ENCODE measurements at regions of chr21 and their contacts with region 1.

Region 1: DNA sequence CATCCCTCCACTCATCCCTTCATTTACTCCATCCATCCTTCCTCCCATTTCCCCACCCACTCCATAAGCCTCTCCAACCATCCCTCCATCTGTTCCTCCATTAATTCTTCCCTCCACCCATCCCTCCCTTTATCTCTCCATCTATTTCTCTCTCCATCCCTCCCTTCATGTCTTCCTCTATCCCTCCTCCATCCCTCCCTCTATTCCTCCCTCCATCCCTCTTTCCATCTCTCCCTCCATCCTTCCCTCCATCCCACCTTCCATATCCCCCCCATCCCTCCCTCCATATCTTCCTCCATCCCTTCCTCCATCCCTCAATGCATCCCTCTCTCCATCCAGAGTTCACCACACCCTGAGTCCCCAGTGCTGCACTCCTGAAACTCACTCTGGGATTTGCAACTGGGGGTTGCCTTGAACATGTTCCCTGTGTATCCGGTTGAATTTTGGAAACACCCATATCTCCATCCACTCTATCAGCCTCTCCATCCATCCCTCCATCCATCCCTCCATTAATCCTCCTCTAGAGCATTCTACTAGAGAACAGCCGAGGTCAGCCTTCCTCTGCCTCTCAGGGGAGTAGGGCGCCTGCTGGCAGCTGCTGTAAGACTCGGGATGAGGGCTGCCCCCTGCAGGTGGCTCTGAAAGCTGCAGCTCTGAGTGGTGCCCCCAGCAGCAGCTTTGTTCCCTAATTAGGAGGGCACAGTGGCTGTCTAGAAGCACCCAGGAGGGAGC is 39.4 kb downstream of the ABCG1 start:
- DNase-seq: peak; percentile 86
- ATAC-seq: peak; percentile 87
- H3K4me3 Mint-ChIP-seq: no peak overlapping the region
- H3K27ac Mint-ChIP-seq: no peak overlapping the region
- H3K4me1 Mint-ChIP-seq: peaks cover 14% of the 10 kb centered on the region; the same call in 1 of the 2 replicates
- H3K27me3 Mint-ChIP-seq: no peaks in the 10 kb centered on the region
- CTCF ChIP-seq: peak; percentile 85

Region 2: GRCh38 chr21:42117229-42117966 is 140.9 kb before region 1 on chr21:
- CTCF ChIA-PET with region 1: interaction called, 10 read pairs
- POLR2A ChIA-PET with region 1: no interaction called
- DNase-seq: peak; percentile 83
- ATAC-seq: peak; percentile 85
- H3K4me3 Mint-ChIP-seq: peak overlapping the region; percentile 41; the same call in 1 of the 2 replicates
- H3K27ac Mint-ChIP-seq: no peak overlapping the region
- H3K4me1 Mint-ChIP-seq: peaks cover 25% of the 10 kb centered on the region
- H3K27me3 Mint-ChIP-seq: no peaks in the 10 kb centered on the region
- CTCF ChIP-seq: peak; percentile 94

Region 3: GRCh38 chr21:42156690-42157577 is 101.4 kb before region 1 on chr21:
- CTCF ChIA-PET with region 1: interaction called, 12 read pairs
- POLR2A ChIA-PET with region 1: no interaction called
- DNase-seq: no peak
- ATAC-seq: no peak
- H3K4me3 Mint-ChIP-seq: no peak overlapping the region
- H3K27ac Mint-ChIP-seq: no peak overlapping the region
- H3K4me1 Mint-ChIP-seq: peaks cover 8% of the 10 kb centered on the region
- H3K27me3 Mint-ChIP-seq: no peaks in the 10 kb centered on the region
- CTCF ChIP-seq: no peak

Region 4: DNA sequence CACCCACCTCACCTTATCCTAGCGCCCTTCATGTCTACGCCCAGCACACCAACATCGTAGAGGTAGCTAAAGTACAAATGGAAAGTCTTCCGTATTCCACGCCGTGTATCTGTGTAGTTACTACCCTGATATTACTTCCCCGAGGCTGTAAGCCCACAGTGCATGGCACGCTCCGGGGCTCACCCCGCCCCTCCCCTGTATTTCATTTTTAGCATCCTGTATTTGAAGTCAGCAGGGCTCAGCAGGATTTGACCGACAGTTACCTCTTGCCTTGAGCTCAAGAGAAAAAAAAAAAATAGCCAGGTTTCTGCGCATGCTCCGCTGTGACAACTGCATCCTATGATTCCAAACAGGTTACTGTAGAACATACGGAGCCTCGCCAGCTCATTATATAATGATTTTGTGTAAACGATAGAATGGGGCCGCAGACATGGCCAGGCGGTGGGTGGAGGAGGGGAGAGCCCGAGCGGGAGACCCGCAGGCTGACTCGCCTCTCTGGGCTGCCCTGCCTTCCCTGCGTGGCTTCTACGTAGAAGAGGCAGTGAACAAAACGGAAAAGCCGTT is 38.1 kb before region 1 on chr21:
- CTCF ChIA-PET with region 1: interaction called, 31 read pairs
- POLR2A ChIA-PET with region 1: no interaction called
- DNase-seq: no peak
- ATAC-seq: peak; percentile 18
- H3K4me3 Mint-ChIP-seq: peak overlapping the region; percentile 87
- H3K27ac Mint-ChIP-seq: no peak overlapping the region
- H3K4me1 Mint-ChIP-seq: peaks cover 7% of the 10 kb centered on the region
- H3K27me3 Mint-ChIP-seq: peaks cover 57% of the 10 kb centered on the region
- CTCF ChIP-seq: no peak

Region 5: GRCh38 chr21:42245331-42246193 is 12.8 kb before region 1 on chr21:
- CTCF ChIA-PET with region 1: interaction called, 20 read pairs
- POLR2A ChIA-PET with region 1: interaction called, 3 read pairs
- DNase-seq: peak; percentile 42
- ATAC-seq: 0 out of 2 replicates have a peak, but pooled peaks have one; percentile 30
- H3K4me3 Mint-ChIP-seq: no peak overlapping the region
- H3K27ac Mint-ChIP-seq: no peak overlapping the region
- H3K4me1 Mint-ChIP-seq: peaks cover 5% of the 10 kb centered on the region; the same call in 1 of the 2 replicates
- H3K27me3 Mint-ChIP-seq: no peaks in the 10 kb centered on the region; the same call in 1 of the 2 replicates
- CTCF ChIP-seq: no peak

Region 6: GRCh38 chr21:42319376-42319775 is 61.1 kb after region 1 on chr21:
- CTCF ChIA-PET with region 1: no interaction called
- POLR2A ChIA-PET with region 1: no interaction called
- DNase-seq: no peak
- ATAC-seq: no peak
- H3K4me3 Mint-ChIP-seq: no peak overlapping the region
- H3K27ac Mint-ChIP-seq: 0 out of 2 replicates have a peak overlapping the region, but pooled peaks have one; percentile 11
- H3K4me1 Mint-ChIP-seq: peaks cover 47% of the 10 kb centered on the region
- H3K27me3 Mint-ChIP-seq: no peaks in the 10 kb centered on the region; the same call in 1 of the 2 replicates
- CTCF ChIP-seq: no peak

Measured in WTC11 (cell line).